ENCODE measurements at regions of chr6 and their contacts with region 1.

Region 1: GRCh38 chr6:112253841-112254816 is at the start of gene LAMA4:
- DNase-seq: peak; percentile 85
- total RNA-seq, gene LAMA4: 93.9 TPM

Region 2: DNA sequence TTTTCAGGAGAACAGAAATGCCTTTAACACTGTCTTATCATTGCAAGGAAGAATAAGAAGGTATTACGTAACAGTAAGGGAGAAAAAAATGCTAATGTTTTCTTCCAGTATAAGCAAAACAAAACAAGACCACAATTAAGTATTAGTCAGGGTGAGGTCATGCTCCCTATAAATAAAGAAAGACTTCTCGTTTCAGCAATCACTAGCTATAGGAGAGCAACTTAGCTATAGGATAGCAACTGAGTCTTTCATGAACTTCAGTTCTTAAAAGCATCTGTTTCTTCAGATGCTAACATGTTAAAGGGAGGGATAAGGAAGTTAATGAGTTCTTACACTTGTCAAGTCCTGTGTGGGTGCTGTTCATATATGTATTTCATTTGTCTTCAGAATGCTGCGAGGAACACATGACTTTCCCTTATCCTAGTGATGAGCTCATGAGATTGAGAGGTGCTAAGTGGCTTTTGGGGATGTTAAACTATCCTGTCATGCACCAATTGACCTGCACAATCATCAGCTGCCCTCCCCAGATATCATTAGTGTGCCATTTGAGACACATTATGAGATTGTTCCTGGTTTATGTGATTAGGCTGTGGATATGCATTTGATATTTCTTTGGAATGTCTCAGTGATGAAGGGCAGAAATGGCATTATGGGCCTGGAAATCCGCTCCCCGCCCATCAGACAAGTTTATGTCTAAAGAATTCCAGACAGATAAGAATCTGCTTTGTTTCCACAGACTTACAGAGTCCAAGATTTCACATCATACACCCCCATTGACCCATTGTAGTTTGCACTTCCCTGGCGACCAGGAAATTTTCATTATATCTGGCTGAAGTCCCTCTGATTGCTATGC is 37.2 kb before region 1 on chr6:
- intact Hi-C with region 1: loop called (anchors 5 kb)
- DNase-seq: no peak

Region 3: DNA sequence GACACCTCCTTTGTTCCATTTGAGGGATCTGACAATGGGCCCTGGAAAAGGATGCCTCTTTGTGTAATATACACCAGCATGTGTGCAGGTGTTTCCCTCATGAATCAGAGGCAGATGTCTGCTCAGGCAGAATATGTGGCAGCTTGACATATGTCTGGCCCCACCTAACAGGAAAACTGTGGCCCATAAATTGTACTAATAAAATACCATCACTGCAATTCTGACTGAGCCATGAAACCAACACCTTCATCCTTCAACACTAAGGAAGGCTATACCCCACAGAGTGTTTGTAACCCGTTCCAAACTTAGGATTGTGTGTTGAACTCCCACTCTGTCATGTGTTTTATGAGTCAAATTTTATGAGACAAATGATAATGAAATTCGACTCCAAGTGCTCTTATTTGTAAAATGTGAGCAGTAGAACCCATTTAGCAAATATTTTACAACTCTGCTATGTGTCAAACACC is 22.5 kb before region 1 on chr6:
- intact Hi-C with region 1: no loop called
- DNase-seq: no peak

Measured in cardiac septum (tissue), 1 donor.